IMR-90 (cell line): ENCODE measurements at regions of chr5 and their contacts with region 1.

Region 1: GRCh38 chr5:72816311-72817145 is at the start of gene TNPO1:
- DNase-seq: peak; percentile 90
- ATAC-seq: peak; percentile 91
- H3K4me3 ChIP-seq: peak within 1 kb of the TSS; percentile 78
- H3K27ac ChIP-seq: peak within 1 kb of the TSS; percentile 95
- H3K4me1 ChIP-seq: peaks cover 5% of the 10 kb centered on the region; the same call in 1 of the 2 replicates
- H3K27me3 ChIP-seq: no peaks in the 10 kb centered on the region
- CTCF ChIP-seq: 0 out of 2 replicates have a peak, but pooled peaks have one; percentile 0
- POLR2A ChIP-seq: peak; percentile 98
- RAD21 ChIP-seq: peak; percentile 1; the same call in 1 of the 2 replicates
- total RNA-seq, gene TNPO1: 400 and 527 TPM in 2 replicates

Region 2: GRCh38 chr5:72366324-72366976 is 450.1 kb before region 1 on chr5:
- CTCF ChIA-PET with region 1: no interaction called
- POLR2A ChIA-PET with region 1: no interaction called
- dilution Hi-C with region 1: no loop called
- in situ Hi-C with region 1: loop called (anchors 5 kb)
- intact Hi-C with region 1: loop called (anchors 2 kb)
- DNase-seq: peak; percentile 80
- ATAC-seq: peak; percentile 78
- H3K4me3 ChIP-seq: no peak overlapping the region
- H3K27ac ChIP-seq: no peak overlapping the region
- H3K4me1 ChIP-seq: peaks cover 10% of the 10 kb centered on the region
- H3K27me3 ChIP-seq: no peaks in the 10 kb centered on the region
- CTCF ChIP-seq: peak; percentile 81
- POLR2A ChIP-seq: no peak
- RAD21 ChIP-seq: peak; percentile 80

Region 3: DNA sequence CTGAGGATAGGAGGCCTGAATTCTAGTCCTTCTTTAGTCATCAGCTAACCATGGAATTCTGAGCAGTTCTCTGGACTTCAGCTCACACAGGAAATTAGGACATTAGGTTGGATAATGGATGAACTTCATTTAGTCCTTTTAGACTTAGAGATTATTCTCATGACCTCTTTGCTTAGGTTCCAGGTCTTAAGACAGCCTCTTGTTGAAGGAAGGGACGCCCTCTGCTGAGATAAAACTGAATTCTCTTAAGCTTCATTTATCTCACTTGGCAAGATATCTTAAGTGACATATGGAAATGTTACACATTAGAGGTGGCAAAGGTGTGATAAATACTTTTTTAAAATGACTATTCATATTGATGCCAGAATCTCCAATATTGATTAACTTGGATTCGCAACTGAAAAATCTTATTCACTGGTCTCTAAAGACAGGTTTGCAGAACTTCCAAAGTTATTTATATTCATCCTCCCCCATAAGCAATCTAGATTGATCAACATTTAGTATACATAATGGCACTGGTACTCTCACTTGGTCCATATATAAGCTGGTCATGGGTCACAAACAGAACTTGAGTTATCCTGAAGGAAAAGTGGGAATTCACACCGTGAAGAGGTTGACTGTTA is 292.5 kb before region 1 on chr5:
- CTCF ChIA-PET with region 1: interaction called, 11 read pairs
- POLR2A ChIA-PET with region 1: no interaction called
- dilution Hi-C with region 1: no loop called
- in situ Hi-C with region 1: no loop called
- intact Hi-C with region 1: loop called (anchors 2 kb)
- DNase-seq: peak; percentile 88
- ATAC-seq: peak; percentile 84
- H3K4me3 ChIP-seq: no peak overlapping the region
- H3K27ac ChIP-seq: no peak overlapping the region
- H3K4me1 ChIP-seq: peaks cover 2% of the 10 kb centered on the region; the same call in 1 of the 2 replicates
- H3K27me3 ChIP-seq: no peaks in the 10 kb centered on the region
- CTCF ChIP-seq: peak; percentile 73
- POLR2A ChIP-seq: no peak
- RAD21 ChIP-seq: peak; percentile 86

Region 4: GRCh38 chr5:72556351-72557166 is 260.0 kb before region 1 on chr5:
- CTCF ChIA-PET with region 1: no interaction called
- POLR2A ChIA-PET with region 1: no interaction called
- dilution Hi-C with region 1: no loop called
- in situ Hi-C with region 1: no loop called
- intact Hi-C with region 1: loop called (anchors 2 kb)
- DNase-seq: peak; percentile 56
- ATAC-seq: peak; percentile 79
- H3K4me3 ChIP-seq: peak overlapping the region; percentile 29
- H3K27ac ChIP-seq: peak overlapping the region; percentile 56
- H3K4me1 ChIP-seq: peaks cover 21% of the 10 kb centered on the region
- H3K27me3 ChIP-seq: no peaks in the 10 kb centered on the region
- CTCF ChIP-seq: 0 out of 2 replicates have a peak, but pooled peaks have one; percentile 14
- POLR2A ChIP-seq: no peak
- RAD21 ChIP-seq: no peak; the same call in 1 of the 2 replicates

Region 5: GRCh38 chr5:72611118-72611730 is 205.3 kb before region 1 on chr5:
- CTCF ChIA-PET with region 1: interaction called, 14 read pairs
- POLR2A ChIA-PET with region 1: no interaction called
- dilution Hi-C with region 1: no loop called
- in situ Hi-C with region 1: no loop called
- intact Hi-C with region 1: loop called (anchors 1 kb)
- DNase-seq: peak; percentile 74
- ATAC-seq: peak; percentile 97
- H3K4me3 ChIP-seq: no peak overlapping the region
- H3K27ac ChIP-seq: no peak overlapping the region
- H3K4me1 ChIP-seq: peaks cover 3% of the 10 kb centered on the region
- H3K27me3 ChIP-seq: no peaks in the 10 kb centered on the region
- CTCF ChIP-seq: peak; percentile 88
- POLR2A ChIP-seq: no peak
- RAD21 ChIP-seq: peak; percentile 83

Region 6: DNA sequence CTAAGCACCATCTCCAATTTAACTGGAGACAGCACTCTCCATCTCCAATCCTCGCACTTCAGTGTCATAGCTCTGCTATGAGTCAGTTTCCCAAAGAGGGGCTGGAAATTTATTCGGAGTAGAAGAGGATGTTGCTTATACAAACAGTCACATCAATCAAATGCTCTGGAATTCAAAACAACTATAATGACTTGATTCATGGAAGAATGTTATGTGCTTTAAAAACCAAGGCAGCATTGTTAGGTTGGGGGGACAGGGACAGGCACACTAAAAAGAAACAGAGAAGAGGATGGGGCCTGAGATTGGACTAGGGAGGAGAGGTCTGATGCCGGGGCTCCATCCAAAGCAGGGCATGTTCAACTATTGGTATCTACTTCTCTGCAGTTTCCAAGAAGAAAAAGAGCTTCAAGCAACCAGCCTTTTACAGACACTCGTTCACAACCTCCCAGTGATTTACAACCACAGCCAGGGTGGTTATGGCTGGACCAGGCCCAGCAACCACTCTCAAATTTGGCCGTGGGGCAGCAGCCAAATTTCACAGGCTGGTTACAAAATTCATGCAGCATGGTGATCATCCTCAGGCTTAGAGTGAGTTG is 191.8 kb before region 1 on chr5:
- CTCF ChIA-PET with region 1: no interaction called
- POLR2A ChIA-PET with region 1: no interaction called
- dilution Hi-C with region 1: no loop called
- in situ Hi-C with region 1: loop called (anchors 10 kb)
- intact Hi-C with region 1: no loop called
- DNase-seq: peak; percentile 76
- ATAC-seq: peak; percentile 93
- H3K4me3 ChIP-seq: no peak overlapping the region
- H3K27ac ChIP-seq: peak overlapping the region; percentile 75
- H3K4me1 ChIP-seq: peaks cover 10% of the 10 kb centered on the region
- H3K27me3 ChIP-seq: no peaks in the 10 kb centered on the region
- CTCF ChIP-seq: no peak
- POLR2A ChIP-seq: no peak
- RAD21 ChIP-seq: no peak

Region 7: DNA sequence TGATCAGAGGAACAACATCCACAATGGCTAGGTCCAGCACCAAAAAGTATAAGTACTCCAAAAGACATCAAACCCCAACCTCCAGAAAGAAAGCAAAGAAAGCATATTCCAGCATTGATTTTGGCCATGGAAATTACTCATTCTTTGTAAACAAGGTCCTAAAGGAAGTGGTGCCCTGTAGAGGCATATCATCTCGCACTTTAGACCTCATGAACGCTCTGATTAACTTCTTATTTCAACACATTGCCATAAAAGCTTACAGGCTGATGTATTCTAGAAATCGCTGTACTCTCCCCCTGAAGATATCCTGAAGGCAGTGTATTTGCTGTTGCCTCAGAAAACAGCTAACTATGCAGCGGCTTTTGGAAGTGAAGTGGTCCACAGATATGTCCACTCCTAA is 82.7 kb before region 1 on chr5:
- CTCF ChIA-PET with region 1: no interaction called
- POLR2A ChIA-PET with region 1: no interaction called
- dilution Hi-C with region 1: no loop called
- in situ Hi-C with region 1: no loop called
- intact Hi-C with region 1: no loop called
- DNase-seq: no peak
- ATAC-seq: no peak
- H3K4me3 ChIP-seq: no peak overlapping the region
- H3K27ac ChIP-seq: no peak overlapping the region
- H3K4me1 ChIP-seq: no peaks in the 10 kb centered on the region
- H3K27me3 ChIP-seq: no peaks in the 10 kb centered on the region
- CTCF ChIP-seq: no peak
- POLR2A ChIP-seq: no peak
- RAD21 ChIP-seq: no peak

Region 8: GRCh38 chr5:72847989-72848473 is 31.5 kb after region 1 on chr5:
- CTCF ChIA-PET with region 1: interaction called, 3 read pairs
- POLR2A ChIA-PET with region 1: interaction called, 4 read pairs
- dilution Hi-C with region 1: no loop called
- in situ Hi-C with region 1: no loop called
- intact Hi-C with region 1: loop called (anchors 1 kb)
- DNase-seq: peak; percentile 93
- ATAC-seq: peak; percentile 81
- H3K4me3 ChIP-seq: peak overlapping the region; percentile 76
- H3K27ac ChIP-seq: peak overlapping the region; percentile 98
- H3K4me1 ChIP-seq: peaks cover 6% of the 10 kb centered on the region
- H3K27me3 ChIP-seq: no peaks in the 10 kb centered on the region
- CTCF ChIP-seq: no peak
- POLR2A ChIP-seq: peak; percentile 94
- RAD21 ChIP-seq: peak; percentile 19; the same call in 1 of the 2 replicates